ENCODE measurements at regions of chr11 and their contacts with region 1.

Region 1: DNA sequence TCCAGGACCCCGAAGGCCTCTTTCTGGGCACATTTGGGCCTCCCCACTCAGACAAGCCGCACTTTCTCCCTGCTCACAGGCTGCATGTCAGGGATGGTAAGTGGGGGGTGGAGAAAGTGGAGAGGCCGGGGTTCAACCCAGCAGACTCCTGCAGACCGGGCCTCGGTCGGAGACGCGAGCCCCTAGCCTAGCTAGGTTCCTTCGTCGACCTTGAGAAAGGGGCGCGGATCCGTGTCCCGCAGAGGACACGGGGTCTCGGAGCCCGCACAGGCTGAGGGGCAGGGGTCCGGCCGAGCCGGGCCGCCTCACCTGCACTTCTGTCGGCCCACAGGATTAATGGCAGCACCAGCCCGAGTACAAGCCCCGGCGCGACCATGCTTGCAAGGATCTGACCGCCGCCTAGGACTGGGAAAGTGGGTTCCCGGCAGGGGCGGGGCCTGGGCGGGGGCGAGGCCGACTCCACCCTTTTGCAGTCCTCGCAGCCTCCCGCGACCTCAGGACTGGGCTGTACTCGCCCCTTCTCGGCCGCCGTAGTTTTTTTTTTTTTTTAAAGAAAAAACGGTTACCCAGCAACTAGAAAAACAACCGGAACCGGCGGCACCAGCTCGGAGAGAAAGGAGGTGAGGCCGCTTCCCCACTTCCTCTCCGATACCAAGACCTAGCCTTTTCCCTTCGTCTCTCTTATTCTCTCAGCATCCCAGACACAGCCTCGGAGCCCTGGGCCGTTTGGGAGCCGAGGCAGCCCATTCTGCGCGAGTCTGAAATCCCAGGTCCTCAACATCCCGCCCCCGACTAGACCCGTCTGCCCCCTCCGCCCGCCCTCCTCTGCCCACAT is at the starts of genes SIAE and SPA17:
- DNase-seq: peak; percentile 91
- ATAC-seq: peak; percentile 89
- H3K4me3 Mint-ChIP-seq: peak within 1 kb of the TSS; percentile 88
- H3K27ac Mint-ChIP-seq: peak within 1 kb of the TSS; percentile 90
- H3K4me1 Mint-ChIP-seq: peaks cover 30% of the 10 kb centered on the region
- H3K27me3 Mint-ChIP-seq: no peaks in the 10 kb centered on the region
- CTCF ChIP-seq: no peak
- total RNA-seq, gene SIAE: 5.0 to 6.2 TPM
- total RNA-seq, gene SPA17: 3.1 to 3.6 TPM

Region 2: DNA sequence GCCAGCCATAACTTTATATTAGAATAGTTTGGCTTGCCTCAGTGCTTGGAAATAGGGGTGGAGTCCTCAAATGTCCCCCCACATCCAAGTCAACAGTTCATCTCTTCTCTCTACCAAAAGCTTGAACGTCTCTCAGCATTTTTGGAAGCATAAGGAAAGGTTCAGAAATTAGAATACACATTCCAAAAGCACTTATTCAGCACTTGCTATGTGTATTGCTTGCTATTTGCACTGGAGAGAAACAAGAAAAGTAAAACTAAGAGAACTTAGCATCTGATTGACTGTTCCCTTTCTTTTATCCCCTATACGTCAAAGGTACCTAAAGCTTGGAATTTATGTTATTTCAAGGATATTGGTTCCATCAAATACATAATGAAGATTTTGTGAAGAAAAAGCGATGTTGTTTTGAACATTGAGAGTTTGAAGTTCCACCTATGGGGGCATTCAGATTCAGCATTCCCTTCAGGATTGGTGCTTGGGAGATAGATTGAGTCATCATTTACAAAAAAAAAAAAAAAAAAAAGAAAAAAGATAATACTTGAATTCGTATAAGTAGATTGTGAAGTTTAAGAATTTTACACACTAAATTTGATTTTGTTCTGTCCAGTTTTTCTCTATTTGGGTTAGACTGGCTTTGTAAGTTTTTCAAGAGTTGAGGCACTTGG is 49.6 kb before region 1 on chr11:
- CTCF ChIA-PET with region 1: interaction called, 15 read pairs
- POLR2A ChIA-PET with region 1: no interaction called
- intact Hi-C with region 1: no loop called
- DNase-seq: no peak
- ATAC-seq: no peak
- H3K4me3 Mint-ChIP-seq: peak overlapping the region; percentile 86
- H3K27ac Mint-ChIP-seq: peak overlapping the region; percentile 93
- H3K4me1 Mint-ChIP-seq: peaks cover 31% of the 10 kb centered on the region
- H3K27me3 Mint-ChIP-seq: peaks cover 6% of the 10 kb centered on the region
- CTCF ChIP-seq: no peak

Region 3: GRCh38 chr11:124746621-124747243 is 73.2 kb after region 1 on chr11:
- CTCF ChIA-PET with region 1: interaction called, 23 read pairs
- POLR2A ChIA-PET with region 1: interaction called, 4 read pairs
- intact Hi-C with region 1: loop called (anchors 5 kb)
- DNase-seq: peak; percentile 79
- ATAC-seq: peak; percentile 92
- H3K4me3 Mint-ChIP-seq: peak overlapping the region; percentile 79
- H3K27ac Mint-ChIP-seq: peak overlapping the region; percentile 79
- H3K4me1 Mint-ChIP-seq: peaks cover 4% of the 10 kb centered on the region
- H3K27me3 Mint-ChIP-seq: peaks cover 6% of the 10 kb centered on the region
- CTCF ChIP-seq: no peak

Region 4: GRCh38 chr11:124769801-124770639 is 96.5 kb after region 1 on chr11:
- CTCF ChIA-PET with region 1: interaction called, 92 read pairs
- POLR2A ChIA-PET with region 1: no interaction called
- intact Hi-C with region 1: no loop called
- DNase-seq: no peak
- ATAC-seq: no peak
- H3K4me3 Mint-ChIP-seq: no peak overlapping the region
- H3K27ac Mint-ChIP-seq: no peak overlapping the region
- H3K4me1 Mint-ChIP-seq: peaks cover 2% of the 10 kb centered on the region
- H3K27me3 Mint-ChIP-seq: no peaks in the 10 kb centered on the region
- CTCF ChIP-seq: no peak

Region 5: GRCh38 chr11:124800226-124800929 is 126.8 kb after region 1 on chr11 and contains the start of gene MSANTD2:
- CTCF ChIA-PET with region 1: interaction called, 43 read pairs
- POLR2A ChIA-PET with region 1: interaction called, 6 read pairs
- intact Hi-C with region 1: no loop called
- DNase-seq: peak; percentile 83
- ATAC-seq: peak; percentile 89
- H3K4me3 Mint-ChIP-seq: peak within 1 kb of the TSS; percentile 87
- H3K27ac Mint-ChIP-seq: peak within 1 kb of the TSS; percentile 92
- H3K4me1 Mint-ChIP-seq: peaks cover 29% of the 10 kb centered on the region
- H3K27me3 Mint-ChIP-seq: no peaks in the 10 kb centered on the region
- CTCF ChIP-seq: no peak
- total RNA-seq, gene MSANTD2: 5.8 to 7.3 TPM